Activated CD4-positive, alpha-beta T cell treated with anti-CD3 and anti-CD28 coated beads, Interleukin-2, amount 10 ng/mL, durations not matched to agents 24 days and 14 days (primary cell): ENCODE measurements at regions of chr1 and their contacts with region 1.

Region 1: GRCh38 chr1:197606168-197606845 is 169.0 kb downstream of the DENND1B start:
- DNase-seq: no peak
- H3K4me3 Mint-ChIP-seq: no peak overlapping the region
- H3K27ac Mint-ChIP-seq: no peak overlapping the region
- H3K4me1 Mint-ChIP-seq: no peaks in the 10 kb centered on the region
- H3K27me3 Mint-ChIP-seq: no peaks in the 10 kb centered on the region

Region 2: DNA sequence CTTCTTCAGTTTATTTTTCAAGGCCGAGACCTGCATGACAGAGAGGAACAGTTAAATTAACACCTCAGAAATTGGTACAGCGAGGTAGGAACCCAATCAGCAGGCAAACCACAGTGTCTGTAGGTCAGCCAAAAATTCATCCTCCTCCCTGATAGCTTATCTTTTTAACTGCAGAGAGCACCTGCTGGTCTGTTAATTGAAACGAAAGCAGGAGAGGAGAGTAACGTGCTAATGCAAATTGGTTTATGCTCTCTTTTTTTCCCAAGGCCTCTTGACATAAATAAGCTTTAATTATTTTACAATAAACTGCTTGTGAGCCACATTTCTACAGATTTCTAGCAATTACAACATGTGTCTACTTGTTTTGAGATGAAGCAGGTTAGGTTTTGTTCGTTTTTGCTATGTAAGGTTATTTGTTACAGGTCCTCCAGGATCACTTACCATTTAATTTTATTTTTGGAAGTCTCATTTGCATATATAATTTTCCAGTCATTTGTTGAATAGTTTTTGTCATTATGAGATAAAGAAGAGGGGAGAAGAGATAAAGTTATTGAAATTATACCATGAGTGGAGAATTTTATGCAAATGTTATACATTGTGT is 10.9 kb before region 1 on chr1:
- intact Hi-C with region 1: loop called (anchors 1 kb)
- DNase-seq: no peak
- H3K4me3 Mint-ChIP-seq: no peak overlapping the region
- H3K27ac Mint-ChIP-seq: no peak overlapping the region
- H3K4me1 Mint-ChIP-seq: peaks cover 3% of the 10 kb centered on the region
- H3K27me3 Mint-ChIP-seq: no peaks in the 10 kb centered on the region

Region 3: GRCh38 chr1:197715806-197716205 is 109.5 kb after region 1 on chr1:
- intact Hi-C with region 1: no loop called
- DNase-seq: no peak
- H3K4me3 Mint-ChIP-seq: no peak overlapping the region
- H3K27ac Mint-ChIP-seq: no peak overlapping the region
- H3K4me1 Mint-ChIP-seq: no peaks in the 10 kb centered on the region
- H3K27me3 Mint-ChIP-seq: no peaks in the 10 kb centered on the region